Activated T-helper 1 cell treated with anti-CD3 and anti-CD28 coated beads, Interleukin-12 subunit alpha, Interleukin-12 subunit beta, Interleukin-2, Interleukin-4 antibody, amounts not matched to agents 30 ng/mL and 10 ng/mL and 1 ng/mL, durations not matched to agents 14 hours and 24 hours and 36 hours (primary cell): ENCODE measurements at regions of chr3 and their contacts with region 1.

Region 1: DNA sequence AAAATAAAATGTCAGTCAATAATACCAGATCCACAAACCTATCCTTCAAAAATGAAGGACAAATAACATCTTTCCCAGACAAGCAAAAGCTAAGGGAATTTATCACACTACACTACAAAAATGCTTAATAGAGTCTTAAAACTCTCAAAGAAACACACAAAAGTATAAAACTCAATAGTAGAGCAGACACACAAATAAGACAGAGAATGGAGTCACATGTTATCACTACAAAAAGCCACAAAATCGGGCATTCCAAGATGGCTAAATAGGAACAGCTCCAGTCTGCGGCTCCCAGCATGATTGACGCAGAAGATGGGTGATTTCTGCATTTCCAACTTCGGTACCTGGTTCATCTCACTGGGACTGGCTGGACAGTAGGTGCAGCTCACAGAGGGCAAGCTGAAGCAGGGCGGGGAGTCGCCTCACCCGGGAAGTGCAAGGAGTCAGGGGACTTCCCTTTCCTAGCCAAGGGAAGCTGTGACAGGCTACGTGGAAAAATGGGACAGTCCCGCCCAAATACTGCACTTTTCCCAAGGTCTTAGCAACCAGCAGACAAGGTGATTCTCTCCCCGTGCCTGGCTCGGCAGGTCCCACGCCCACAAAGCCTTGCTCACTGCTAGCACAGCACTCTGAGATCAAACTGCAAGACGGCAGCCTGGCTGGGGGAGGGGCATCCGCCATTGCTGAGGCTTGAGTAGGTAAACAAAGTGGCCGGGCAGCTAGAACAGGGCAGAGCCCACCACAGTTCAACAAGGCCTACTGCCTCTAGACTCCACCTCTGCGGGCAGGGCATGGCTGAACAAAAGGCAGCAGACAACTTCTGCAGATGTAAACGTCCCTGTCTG is 46.3 kb downstream of the SENP7 start:
- DNase-seq: peak; percentile 25
- H3K4me3 Mint-ChIP-seq: peak overlapping the region; percentile 37
- H3K27ac Mint-ChIP-seq: peak overlapping the region; percentile 66
- H3K4me1 Mint-ChIP-seq: peaks cover 23% of the 10 kb centered on the region
- H3K27me3 Mint-ChIP-seq: no peaks in the 10 kb centered on the region

Region 2: DNA sequence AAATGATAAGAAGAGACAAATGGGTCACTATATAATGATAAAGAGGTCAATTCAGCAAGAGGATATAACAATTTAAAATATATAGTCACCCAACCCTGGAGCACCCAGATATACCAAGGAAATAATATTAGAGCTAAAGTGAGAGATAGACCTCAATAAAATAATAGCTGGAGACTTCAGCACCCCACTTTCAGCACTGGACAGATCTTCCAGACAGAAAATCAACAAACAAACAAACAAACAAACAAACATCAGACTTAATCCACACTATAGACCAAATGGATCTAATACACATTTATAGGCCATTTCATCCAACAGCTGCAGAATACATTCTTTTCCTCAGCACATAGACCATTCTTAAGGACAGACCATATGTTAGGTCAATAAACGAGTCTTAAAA is 33.0 kb before region 1 on chr3:
- intact Hi-C with region 1: no loop called
- DNase-seq: no peak
- H3K4me3 Mint-ChIP-seq: no peak overlapping the region
- H3K27ac Mint-ChIP-seq: no peak overlapping the region
- H3K4me1 Mint-ChIP-seq: no peaks in the 10 kb centered on the region
- H3K27me3 Mint-ChIP-seq: no peaks in the 10 kb centered on the region

Region 3: DNA sequence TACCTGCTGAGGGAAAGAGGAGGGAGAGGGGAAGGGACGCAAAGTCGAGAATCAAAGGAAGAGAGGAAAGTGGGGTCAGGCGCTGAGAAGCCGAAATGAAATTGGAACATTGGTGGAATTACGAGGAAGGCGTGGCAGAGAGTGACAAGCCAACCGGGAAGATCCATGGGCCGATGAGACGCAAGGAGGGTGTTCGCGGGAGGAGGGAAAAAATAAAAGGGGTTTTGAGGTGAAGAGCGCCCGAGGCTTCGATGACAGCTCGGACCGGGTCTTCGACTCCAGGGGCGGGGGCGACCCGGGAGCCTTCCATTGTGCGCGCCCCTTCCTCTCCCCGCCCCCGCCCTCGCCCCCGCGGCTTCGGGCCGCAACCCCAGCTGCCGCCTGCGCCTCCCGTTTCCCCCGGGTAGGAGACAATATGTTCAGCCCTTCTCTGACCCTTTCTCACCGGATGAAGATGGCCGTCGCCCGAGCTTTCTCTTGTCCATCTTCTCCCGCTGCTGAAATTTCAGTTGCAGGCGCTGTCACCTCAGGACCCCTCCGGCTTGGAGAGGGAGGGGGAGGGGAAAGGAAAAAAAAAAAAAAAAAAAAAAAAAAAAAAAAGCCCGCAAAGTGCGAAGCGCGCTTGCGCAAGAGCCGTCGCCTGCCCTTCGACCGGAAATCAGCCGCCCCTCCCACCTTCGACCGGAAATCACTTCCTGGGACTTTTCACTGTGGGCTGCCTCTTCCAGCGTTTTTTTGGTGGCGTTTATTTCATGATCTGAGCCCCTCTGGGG is 46.1 kb after region 1 on chr3 and contains the start of gene SENP7:
- intact Hi-C with region 1: loop called (anchors 5 kb)
- DNase-seq: peak; percentile 72
- H3K4me3 Mint-ChIP-seq: peak within 1 kb of the TSS; percentile 94
- H3K27ac Mint-ChIP-seq: peak within 1 kb of the TSS; percentile 95
- H3K4me1 Mint-ChIP-seq: peaks cover 31% of the 10 kb centered on the region
- H3K27me3 Mint-ChIP-seq: no peaks in the 10 kb centered on the region
- total RNA-seq, gene SENP7: 9.1 and 10.7 TPM in 2 replicates